Dendritic cell treated with granulocyte-macrophage colony-stimulating factor and Interleukin-4, amounts not matched to agents 40 ng/mL and 50 ng/mL, for 4 days (primary cell): ENCODE measurements at regions of chr4 and their contacts with region 1.

Region 1: DNA sequence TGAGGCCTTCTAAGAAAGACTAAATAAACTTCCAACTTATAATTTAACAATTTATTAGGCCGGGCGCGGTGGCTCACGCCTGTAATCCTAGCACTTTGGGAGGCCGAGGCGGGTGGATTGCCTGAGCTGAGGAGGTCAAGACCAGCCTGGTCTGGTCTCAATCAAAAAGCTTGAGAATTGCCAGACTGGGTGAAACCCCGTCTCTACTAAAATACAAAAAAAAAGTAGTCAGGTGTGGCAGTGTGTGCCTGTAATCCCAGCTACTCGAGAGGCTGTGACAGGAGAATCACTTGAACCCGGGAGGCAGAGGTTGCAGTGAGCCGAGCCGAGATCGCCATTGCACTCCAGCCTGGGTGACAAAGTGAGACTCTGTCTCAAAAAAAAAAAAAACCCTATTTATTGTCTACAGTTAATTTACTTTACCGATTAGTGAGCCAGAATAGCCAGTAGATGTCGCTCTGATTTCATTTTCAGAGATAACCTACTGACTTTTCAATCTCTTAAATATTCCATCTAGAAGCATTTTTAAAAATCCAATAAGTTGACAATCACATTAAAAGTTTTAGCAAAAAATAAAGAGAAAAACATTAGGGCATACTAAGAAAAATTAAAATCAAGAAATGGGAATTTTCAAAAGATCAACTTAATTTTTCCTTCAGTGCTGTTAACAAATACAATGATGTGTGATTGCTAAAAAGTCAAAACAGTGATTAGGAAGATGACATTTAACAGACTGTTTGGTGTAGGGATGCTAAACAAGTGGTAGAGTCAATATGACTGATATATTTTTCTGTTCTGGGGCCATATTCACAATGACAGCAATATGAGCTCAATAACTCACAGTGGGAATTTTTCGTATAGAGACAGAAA is 4.3 kb upstream of the SHROOM3 start:
- H3K4me3 Mint-ChIP-seq: no peak overlapping the region
- H3K27ac Mint-ChIP-seq: no peak overlapping the region
- H3K4me1 Mint-ChIP-seq: peaks cover 8% of the 10 kb centered on the region
- H3K27me3 Mint-ChIP-seq: peaks cover 17% of the 10 kb centered on the region

Region 2: GRCh38 chr4:76504613-76505465 is 74.1 kb after region 1 on chr4:
- intact Hi-C with region 1: loop called (anchors 2 kb)
- H3K4me3 Mint-ChIP-seq: no peak overlapping the region
- H3K27ac Mint-ChIP-seq: no peak overlapping the region
- H3K4me1 Mint-ChIP-seq: no peaks in the 10 kb centered on the region
- H3K27me3 Mint-ChIP-seq: peaks cover 3% of the 10 kb centered on the region

Region 3: GRCh38 chr4:76758290-76758882 is 327.6 kb after region 1 on chr4:
- intact Hi-C with region 1: loop called (anchors 5 kb)
- H3K4me3 Mint-ChIP-seq: no peak overlapping the region
- H3K27ac Mint-ChIP-seq: no peak overlapping the region
- H3K4me1 Mint-ChIP-seq: no peaks in the 10 kb centered on the region
- H3K27me3 Mint-ChIP-seq: peaks cover 13% of the 10 kb centered on the region

Region 4: GRCh38 chr4:76993787-76994641 is 563.3 kb after region 1 on chr4:
- intact Hi-C with region 1: no loop called
- H3K4me3 Mint-ChIP-seq: no peak overlapping the region
- H3K27ac Mint-ChIP-seq: no peak overlapping the region
- H3K4me1 Mint-ChIP-seq: peaks cover 6% of the 10 kb centered on the region
- H3K27me3 Mint-ChIP-seq: peaks cover 5% of the 10 kb centered on the region